ENCODE measurements at regions of chr19 and their contacts with region 1.

Region 1: GRCh38 chr19:48363810-48364563 is at the starts of genes SYNGR4 and TMEM143:
- DNase-seq: peak; percentile 100
- ATAC-seq: peak; percentile 89
- H3K4me3 ChIP-seq: peak within 1 kb of the TSS; percentile 76 to 91 (median 85)
- H3K4me3 Mint-ChIP-seq: peak within 1 kb of the TSS; percentile 95
- H3K27ac ChIP-seq: peak within 1 kb of the TSS; percentile 93 to 97
- H3K27ac Mint-ChIP-seq: peak within 1 kb of the TSS; percentile 97
- H3K4me1 ChIP-seq: peaks cover 5 to 20% of the 10 kb centered on the region in 2 donors
- H3K4me1 Mint-ChIP-seq: peaks cover 15% of the 10 kb centered on the region
- H3K27me3 ChIP-seq: no peaks in the 10 kb centered on the region
- H3K27me3 Mint-ChIP-seq: no peaks in the 10 kb centered on the region
- CTCF ChIP-seq: no peak
- total RNA-seq, gene SYNGR4: not detected in 2 replicates
- total RNA-seq, gene TMEM143: 30.0 and 34.5 TPM in 2 replicates

Region 2: DNA sequence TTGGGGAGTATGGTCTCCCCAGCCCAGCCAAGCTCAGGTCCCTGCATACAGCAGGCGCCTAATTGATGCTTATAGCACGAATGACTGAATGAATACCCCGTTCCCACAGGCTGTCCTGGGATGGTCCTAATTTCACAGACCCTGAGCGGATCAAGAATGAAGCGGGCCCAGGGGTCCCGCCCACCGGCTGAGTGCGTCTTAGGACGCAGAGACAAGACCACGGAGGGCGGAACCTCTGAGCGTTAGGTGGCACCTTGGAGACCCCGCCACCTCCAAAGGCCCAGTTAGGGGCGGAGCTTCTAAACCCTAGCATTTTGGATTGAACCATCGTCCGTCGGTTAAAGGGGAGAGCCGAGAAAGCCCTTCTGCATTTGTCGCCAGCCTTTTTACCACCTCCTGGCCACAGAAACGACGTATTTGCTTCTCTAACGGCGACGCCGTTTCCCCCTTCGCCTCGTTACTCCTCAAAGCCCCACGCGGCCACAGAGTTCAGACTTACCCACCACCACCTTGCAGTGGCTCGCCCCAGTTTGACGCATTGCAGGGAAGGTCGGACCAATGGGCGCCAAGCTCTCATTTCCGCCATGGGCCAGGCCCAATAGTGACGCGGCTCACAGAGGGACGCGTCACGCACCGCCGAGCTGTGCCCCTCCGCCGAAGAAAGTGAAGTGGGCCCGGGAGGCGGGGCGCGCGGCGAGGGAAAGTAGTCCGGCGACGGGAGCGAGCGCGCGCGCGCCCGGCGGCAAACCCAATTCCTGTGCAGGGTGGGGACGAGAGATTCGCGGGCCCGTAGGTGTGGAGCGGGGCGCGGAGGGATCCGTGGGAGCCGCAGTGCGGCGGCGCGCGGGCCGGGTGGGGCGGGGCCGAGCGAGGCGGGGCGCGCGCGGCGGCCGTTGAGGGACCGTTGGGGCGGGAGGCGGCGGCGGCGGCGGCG is 1763.3 kb before region 1 on chr19:
- CTCF ChIA-PET with region 1: no interaction called
- POLR2A ChIA-PET with region 1: no interaction called
- intact Hi-C with region 1: loop called (anchors 5 kb)
- DNase-seq: peak; percentile 100
- ATAC-seq: peak; percentile 89
- H3K4me3 ChIP-seq: peak overlapping the region; percentile 64 to 100 (median 99)
- H3K4me3 Mint-ChIP-seq: peak overlapping the region; percentile 100
- H3K27ac ChIP-seq: peak overlapping the region; percentile 98 to 100
- H3K27ac Mint-ChIP-seq: peak overlapping the region; percentile 100
- H3K4me1 ChIP-seq: peaks cover 19 to 30% of the 10 kb centered on the region in 2 donors
- H3K4me1 Mint-ChIP-seq: peaks cover 31% of the 10 kb centered on the region
- H3K27me3 ChIP-seq: no peaks in the 10 kb centered on the region
- H3K27me3 Mint-ChIP-seq: no peaks in the 10 kb centered on the region
- CTCF ChIP-seq: no peak

Region 3: GRCh38 chr19:48006762-48007161 is 357.2 kb before region 1 on chr19:
- CTCF ChIA-PET with region 1: no interaction called
- POLR2A ChIA-PET with region 1: no interaction called
- intact Hi-C with region 1: no loop called
- DNase-seq: no peak
- ATAC-seq: no peak
- H3K4me3 ChIP-seq: no peak overlapping the region
- H3K4me3 Mint-ChIP-seq: no peak overlapping the region
- H3K27ac ChIP-seq: no peak overlapping the region
- H3K27ac Mint-ChIP-seq: no peak overlapping the region
- H3K4me1 ChIP-seq: no peaks in the 10 kb centered on the region
- H3K4me1 Mint-ChIP-seq: no peaks in the 10 kb centered on the region
- H3K27me3 ChIP-seq: peaks cover 0 to 10% (median 3%) of the 10 kb centered on the region in 4 experiments
- H3K27me3 Mint-ChIP-seq: peaks cover 28% of the 10 kb centered on the region
- CTCF ChIP-seq: peak; percentile 13

Region 4: DNA sequence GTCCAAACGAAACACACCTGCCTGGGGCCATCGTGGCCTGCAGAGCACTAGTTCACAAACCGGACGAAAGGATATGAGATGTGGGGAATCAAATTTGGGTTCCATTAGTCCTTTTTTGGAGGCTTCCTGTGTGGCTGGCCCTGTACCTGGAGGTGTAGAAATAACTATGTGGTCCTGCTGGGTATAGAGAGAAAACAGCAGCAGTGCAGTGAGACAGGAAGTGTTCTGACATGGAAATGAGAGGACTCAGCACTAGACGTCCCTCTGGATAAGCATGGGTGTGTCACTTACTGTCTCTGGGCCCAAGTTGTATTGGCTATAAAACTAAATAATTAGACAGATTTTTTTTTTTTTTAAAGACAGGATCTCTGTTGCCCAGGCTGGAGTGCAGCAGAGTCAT is 15.1 kb after region 1 on chr19:
- CTCF ChIA-PET with region 1: no interaction called
- POLR2A ChIA-PET with region 1: no interaction called
- intact Hi-C with region 1: no loop called
- DNase-seq: no peak
- ATAC-seq: no peak
- H3K4me3 ChIP-seq: no peak overlapping the region
- H3K4me3 Mint-ChIP-seq: no peak overlapping the region
- H3K27ac ChIP-seq: no peak overlapping the region
- H3K27ac Mint-ChIP-seq: no peak overlapping the region
- H3K4me1 ChIP-seq: no peaks in the 10 kb centered on the region
- H3K4me1 Mint-ChIP-seq: no peaks in the 10 kb centered on the region
- H3K27me3 ChIP-seq: no peaks in the 10 kb centered on the region
- H3K27me3 Mint-ChIP-seq: no peaks in the 10 kb centered on the region
- CTCF ChIP-seq: no peak

Region 5: GRCh38 chr19:48398375-48399235 is 34.6 kb after region 1 on chr19:
- CTCF ChIA-PET with region 1: interaction called, 7 read pairs
- POLR2A ChIA-PET with region 1: interaction called, 10 read pairs
- intact Hi-C with region 1: loop called (anchors 1 kb)
- DNase-seq: peak; percentile 90
- ATAC-seq: peak; percentile 70
- H3K4me3 ChIP-seq: peak overlapping the region in 4 of 5 experiments; percentile 24 to 65 (median 46)
- H3K4me3 Mint-ChIP-seq: peak overlapping the region; percentile 86
- H3K27ac ChIP-seq: no peak overlapping the region
- H3K27ac Mint-ChIP-seq: peak overlapping the region; percentile 80
- H3K4me1 ChIP-seq: peaks cover 42 to 43% of the 10 kb centered on the region in 2 donors
- H3K4me1 Mint-ChIP-seq: peaks cover 36% of the 10 kb centered on the region
- H3K27me3 ChIP-seq: peaks cover 0 to 44% (median 28%) of the 10 kb centered on the region in 4 experiments
- H3K27me3 Mint-ChIP-seq: peaks cover 29% of the 10 kb centered on the region
- CTCF ChIP-seq: no peak

Region 6: GRCh38 chr19:48468775-48469288 is 104.8 kb after region 1 on chr19:
- CTCF ChIA-PET with region 1: no interaction called
- POLR2A ChIA-PET with region 1: no interaction called
- intact Hi-C with region 1: loop called (anchors 1 kb)
- DNase-seq: peak; percentile 100
- ATAC-seq: peak; percentile 87
- H3K4me3 ChIP-seq: peak overlapping the region; percentile 8 to 90 (median 83)
- H3K4me3 Mint-ChIP-seq: peak overlapping the region; percentile 92
- H3K27ac ChIP-seq: peak overlapping the region; percentile 52 to 84
- H3K27ac Mint-ChIP-seq: peak overlapping the region; percentile 89
- H3K4me1 ChIP-seq: peaks cover 11 to 15% of the 10 kb centered on the region in 2 donors
- H3K4me1 Mint-ChIP-seq: peaks cover 17% of the 10 kb centered on the region
- H3K27me3 ChIP-seq: peaks cover 0 to 3% (median 0%) of the 10 kb centered on the region in 4 experiments
- H3K27me3 Mint-ChIP-seq: no peaks in the 10 kb centered on the region
- CTCF ChIP-seq: no peak

Region 7: DNA sequence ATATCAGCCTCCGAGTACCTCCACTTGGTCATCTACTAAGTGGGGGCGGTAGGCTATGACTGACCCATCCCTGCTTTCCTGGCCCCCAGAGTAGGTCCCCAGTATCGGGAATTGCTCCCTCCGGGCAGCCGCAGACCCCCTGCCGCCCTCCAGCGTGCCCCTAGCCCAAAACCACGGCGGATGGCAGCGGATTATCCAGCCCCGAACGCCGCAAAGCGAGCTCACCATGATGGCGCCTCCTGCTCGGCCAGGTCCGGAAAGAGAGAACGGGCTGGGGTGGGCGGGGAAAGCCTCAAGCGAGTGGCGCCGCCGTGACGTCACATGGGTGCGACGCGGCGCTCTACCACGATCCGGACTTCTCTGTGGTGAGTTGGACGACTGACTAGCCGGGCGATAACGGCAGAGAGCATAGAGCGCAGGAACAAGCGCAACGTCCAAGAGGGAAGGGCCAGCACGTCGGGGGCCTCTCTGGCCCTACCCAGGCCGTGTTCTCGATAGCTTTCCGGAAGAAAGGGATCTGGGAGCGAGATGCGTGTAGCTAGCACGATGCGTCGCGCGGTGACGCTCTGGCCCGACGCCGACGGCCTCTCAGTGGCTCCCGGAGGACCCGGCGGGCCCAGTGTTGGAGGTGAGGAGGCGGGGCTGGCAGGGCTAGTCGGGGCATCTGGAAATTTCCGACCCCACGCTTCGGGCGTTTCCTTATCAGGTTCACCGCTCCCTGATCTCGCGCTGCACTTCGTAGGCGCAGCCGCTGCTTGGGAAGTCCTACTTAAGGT is 255.1 kb after region 1 on chr19 and contains the starts of genes RPL18 and SPHK2:
- CTCF ChIA-PET with region 1: no interaction called
- POLR2A ChIA-PET with region 1: interaction called, 4 read pairs
- intact Hi-C with region 1: loop called (anchors 1 kb)
- DNase-seq: peak; percentile 99
- ATAC-seq: peak; percentile 82
- H3K4me3 ChIP-seq: peak within 1 kb of the TSS; percentile 95 to 100 (median 99)
- H3K4me3 Mint-ChIP-seq: peak within 1 kb of the TSS; percentile 98
- H3K27ac ChIP-seq: peak within 1 kb of the TSS; percentile 87 to 91
- H3K27ac Mint-ChIP-seq: peak within 1 kb of the TSS; percentile 98
- H3K4me1 ChIP-seq: peaks cover 25 to 45% of the 10 kb centered on the region in 2 donors
- H3K4me1 Mint-ChIP-seq: peaks cover 51% of the 10 kb centered on the region
- H3K27me3 ChIP-seq: no peaks in the 10 kb centered on the region
- H3K27me3 Mint-ChIP-seq: no peaks in the 10 kb centered on the region
- CTCF ChIP-seq: no peak
- total RNA-seq, gene RPL18: 2,217 and 2,248 TPM in 2 replicates
- total RNA-seq, gene SPHK2: 45.4 and 47.3 TPM in 2 replicates

Region 8: DNA sequence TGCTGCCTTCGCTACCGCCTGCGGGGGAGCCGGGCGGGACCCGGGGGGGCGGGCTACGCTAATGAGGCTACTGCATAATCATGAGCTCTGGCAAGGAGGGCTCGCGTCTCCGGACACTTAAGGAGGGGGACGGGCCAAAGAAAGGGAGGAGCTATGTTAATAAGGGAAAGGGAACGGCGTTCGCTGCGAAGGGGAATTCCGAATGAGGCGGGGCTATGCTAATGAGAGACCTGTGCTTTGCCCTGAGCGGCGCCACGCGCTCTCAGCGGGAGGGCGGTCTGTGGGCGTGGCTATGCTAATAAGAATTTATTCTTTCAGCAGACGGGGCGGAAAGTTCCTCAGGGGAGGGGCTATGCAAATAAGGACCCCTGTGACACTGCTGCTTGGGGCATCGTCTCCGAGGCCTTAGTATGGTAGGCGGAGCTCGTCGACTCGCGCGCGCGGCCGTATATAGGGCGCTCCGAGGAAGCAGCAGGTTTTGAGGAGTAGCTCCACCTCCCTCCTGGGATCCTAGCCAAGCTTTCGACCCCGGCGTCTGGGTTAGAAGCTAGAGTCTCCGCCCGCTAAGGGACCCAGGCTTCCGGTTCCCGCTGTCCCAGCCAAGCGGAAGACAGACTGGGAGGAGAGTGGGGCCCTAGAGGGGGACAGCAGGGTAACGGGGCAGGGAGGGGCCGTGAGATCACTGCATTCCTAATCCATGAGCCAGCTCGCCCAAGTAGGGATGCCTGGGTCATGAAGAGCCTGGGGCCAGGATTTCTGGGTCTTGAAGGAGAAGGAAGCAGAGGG is 1276.3 kb after region 1 on chr19 and contains the start of gene RRAS:
- CTCF ChIA-PET with region 1: no interaction called
- POLR2A ChIA-PET with region 1: interaction called, 4 read pairs
- intact Hi-C with region 1: loop called (anchors 2 kb)
- DNase-seq: peak; percentile 100
- ATAC-seq: peak; percentile 69
- H3K4me3 ChIP-seq: peak within 1 kb of the TSS; percentile 35 to 97 (median 80)
- H3K4me3 Mint-ChIP-seq: peak within 1 kb of the TSS; percentile 95
- H3K27ac ChIP-seq: peak within 1 kb of the TSS; percentile 91 to 96
- H3K27ac Mint-ChIP-seq: peak within 1 kb of the TSS; percentile 95
- H3K4me1 ChIP-seq: peaks cover 37 to 55% of the 10 kb centered on the region in 2 donors
- H3K4me1 Mint-ChIP-seq: peaks cover 53% of the 10 kb centered on the region
- H3K27me3 ChIP-seq: no peaks in the 10 kb centered on the region
- H3K27me3 Mint-ChIP-seq: no peaks in the 10 kb centered on the region
- CTCF ChIP-seq: no peak
- total RNA-seq, gene RRAS: 5.6 and 6.3 TPM in 2 replicates

Measured in B cell (primary cell).